ENCODE measurements at regions of chr20 and their contacts with region 1.

Region 1: GRCh38 chr20:47379433-47380150 is 23.1 kb upstream of the ZMYND8 start:
- DNase-seq: no peak
- ATAC-seq: no peak
- H3K4me3 Mint-ChIP-seq: no peak overlapping the region
- H3K27ac Mint-ChIP-seq: no peak overlapping the region
- H3K4me1 Mint-ChIP-seq: peaks cover 18% of the 10 kb centered on the region
- H3K27me3 Mint-ChIP-seq: peaks cover 2% of the 10 kb centered on the region

Region 2: GRCh38 chr20:47213966-47214365 is 165.6 kb before region 1 on chr20:
- CTCF ChIA-PET with region 1: interaction called, 15 read pairs
- POLR2A ChIA-PET with region 1: no interaction called
- intact Hi-C with region 1: no loop called
- DNase-seq: no peak
- ATAC-seq: no peak
- H3K4me3 Mint-ChIP-seq: no peak overlapping the region
- H3K27ac Mint-ChIP-seq: no peak overlapping the region
- H3K4me1 Mint-ChIP-seq: no peaks in the 10 kb centered on the region
- H3K27me3 Mint-ChIP-seq: no peaks in the 10 kb centered on the region

Region 3: GRCh38 chr20:47281376-47281775 is 98.2 kb before region 1 on chr20:
- CTCF ChIA-PET with region 1: interaction called, 21 read pairs
- POLR2A ChIA-PET with region 1: interaction called, 6 read pairs
- intact Hi-C with region 1: no loop called
- DNase-seq: no peak
- ATAC-seq: no peak
- H3K4me3 Mint-ChIP-seq: no peak overlapping the region
- H3K27ac Mint-ChIP-seq: no peak overlapping the region
- H3K4me1 Mint-ChIP-seq: peaks cover 8% of the 10 kb centered on the region
- H3K27me3 Mint-ChIP-seq: no peaks in the 10 kb centered on the region

Region 4: DNA sequence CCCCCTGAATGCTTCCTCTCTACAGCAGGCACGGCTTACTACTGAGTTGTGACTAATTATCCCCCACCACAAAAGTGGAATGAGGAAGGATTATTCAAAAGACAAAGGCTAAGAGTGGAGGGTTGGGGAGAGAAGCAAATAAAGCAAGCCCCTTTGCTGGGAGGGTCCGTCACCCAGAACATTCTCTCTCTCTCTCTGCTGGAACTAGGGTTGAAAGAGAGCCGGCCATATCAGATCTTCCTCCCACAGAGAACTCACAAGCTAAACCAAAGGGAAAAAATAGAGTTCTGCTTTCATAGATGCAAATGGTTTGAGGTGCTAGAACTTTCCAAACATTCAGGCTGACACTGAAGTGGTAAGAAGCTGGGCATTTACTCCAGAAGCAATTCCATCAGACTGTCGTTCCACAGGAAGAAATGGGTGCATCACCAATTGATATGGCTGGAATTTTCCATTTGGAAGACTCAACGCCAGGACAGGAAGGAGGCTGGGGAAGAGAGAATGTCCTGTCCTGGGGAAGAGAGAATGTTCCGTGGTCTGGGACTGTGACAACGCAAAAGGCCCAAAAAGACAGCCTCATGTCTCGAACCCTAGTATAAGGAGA is 31.0 kb before region 1 on chr20:
- CTCF ChIA-PET with region 1: interaction called, 64 read pairs
- POLR2A ChIA-PET with region 1: no interaction called
- intact Hi-C with region 1: no loop called
- DNase-seq: no peak
- ATAC-seq: no peak
- H3K4me3 Mint-ChIP-seq: no peak overlapping the region
- H3K27ac Mint-ChIP-seq: no peak overlapping the region
- H3K4me1 Mint-ChIP-seq: peaks cover 34% of the 10 kb centered on the region
- H3K27me3 Mint-ChIP-seq: no peaks in the 10 kb centered on the region

Region 5: GRCh38 chr20:47411161-47411560 is 31.6 kb after region 1 on chr20:
- CTCF ChIA-PET with region 1: interaction called, 17 read pairs
- POLR2A ChIA-PET with region 1: no interaction called
- intact Hi-C with region 1: no loop called
- DNase-seq: no peak
- ATAC-seq: no peak
- H3K4me3 Mint-ChIP-seq: no peak overlapping the region
- H3K27ac Mint-ChIP-seq: no peak overlapping the region
- H3K4me1 Mint-ChIP-seq: peaks cover 26% of the 10 kb centered on the region
- H3K27me3 Mint-ChIP-seq: no peaks in the 10 kb centered on the region

Region 6: GRCh38 chr20:47620808-47621805 is 241.5 kb after region 1 on chr20:
- CTCF ChIA-PET with region 1: interaction called, 39 read pairs
- POLR2A ChIA-PET with region 1: no interaction called
- intact Hi-C with region 1: loop called (anchors 1 to 2 kb)
- DNase-seq: no peak
- ATAC-seq: peak; percentile 61
- H3K4me3 Mint-ChIP-seq: no peak overlapping the region
- H3K27ac Mint-ChIP-seq: peak overlapping the region; percentile 79
- H3K4me1 Mint-ChIP-seq: peaks cover 33% of the 10 kb centered on the region
- H3K27me3 Mint-ChIP-seq: no peaks in the 10 kb centered on the region

Region 7: DNA sequence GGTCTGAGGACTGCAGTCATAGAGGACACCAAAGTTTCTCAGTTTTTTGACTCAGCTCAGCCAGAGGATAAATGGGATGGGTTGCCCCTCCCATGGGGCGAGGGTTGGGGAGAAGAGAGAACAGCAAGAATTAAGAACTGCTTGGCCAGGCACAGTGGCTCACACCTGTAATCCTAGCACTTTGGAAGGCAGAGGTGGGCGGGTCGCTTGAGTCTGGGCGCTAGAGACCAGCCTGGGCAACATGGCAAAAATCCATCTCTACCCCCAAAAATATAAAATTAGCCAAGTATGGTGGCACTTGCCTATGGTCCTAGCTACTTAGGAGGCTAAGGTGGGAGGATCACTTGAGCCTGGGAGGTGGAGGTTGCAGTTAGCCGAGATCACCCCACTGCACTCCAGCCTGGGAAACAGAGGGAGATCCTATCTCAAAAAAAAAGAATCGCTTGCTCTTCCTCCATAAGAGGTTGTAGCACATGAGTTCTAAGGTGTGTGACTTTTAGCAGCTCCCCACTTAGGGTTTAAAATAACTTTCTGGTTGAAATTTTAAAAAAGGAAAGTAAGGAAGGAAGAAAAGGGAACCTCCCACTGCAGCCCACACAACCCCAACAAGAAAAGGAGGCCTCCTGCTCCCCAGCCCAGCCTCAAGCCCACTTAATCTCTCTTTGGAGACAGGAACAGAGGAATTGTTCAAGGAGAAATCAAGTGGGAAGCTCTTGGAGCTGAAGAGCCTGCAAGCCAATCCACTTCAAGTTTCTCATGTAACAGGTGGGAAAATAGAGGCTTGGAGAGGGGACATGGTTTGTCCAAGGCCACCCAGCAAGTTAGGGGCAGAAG is 1487.1 kb after region 1 on chr20:
- CTCF ChIA-PET with region 1: no interaction called
- POLR2A ChIA-PET with region 1: no interaction called
- intact Hi-C with region 1: no loop called
- DNase-seq: no peak
- ATAC-seq: no peak
- H3K4me3 Mint-ChIP-seq: no peak overlapping the region
- H3K27ac Mint-ChIP-seq: no peak overlapping the region
- H3K4me1 Mint-ChIP-seq: no peaks in the 10 kb centered on the region
- H3K27me3 Mint-ChIP-seq: no peaks in the 10 kb centered on the region

Measured in activated CD4-positive, alpha-beta T cell treated with anti-CD3 and anti-CD28 coated beads for 36 hours (primary cell).